Naive thymus-derived CD4-positive, alpha-beta T cell (primary cell): ENCODE measurements at regions of chr13 and their contacts with region 1.

Region 1: DNA sequence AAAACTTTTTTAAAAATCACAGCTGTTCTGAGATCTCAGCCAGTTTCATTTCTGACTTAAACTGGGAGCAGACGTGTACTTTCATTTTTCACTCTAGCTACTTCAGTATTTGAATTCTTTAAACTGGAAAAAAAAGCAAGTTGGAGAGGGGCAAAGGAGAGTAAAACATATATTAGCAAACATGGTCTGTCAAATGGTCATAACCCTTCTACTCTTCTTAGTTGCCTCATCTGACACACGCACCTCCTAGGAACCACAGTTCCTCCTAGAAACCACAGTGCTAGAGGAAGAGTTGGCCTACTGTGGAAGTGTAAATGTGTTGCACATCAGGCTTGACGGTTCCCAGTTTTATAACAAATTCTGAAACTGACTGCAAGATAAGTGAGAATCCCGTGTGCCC is 47.2 kb downstream of the TM9SF2 start:
- DNase-seq: no peak
- ATAC-seq: peak; percentile 49
- H3K4me3 ChIP-seq: no peak overlapping the region
- H3K4me3 Mint-ChIP-seq: peak overlapping the region in 1 of 10 donors; percentile 14
- H3K27ac ChIP-seq: peak overlapping the region; percentile 29
- H3K27ac Mint-ChIP-seq: peak overlapping the region; percentile 29 to 97 (median 79)
- H3K4me1 ChIP-seq: peaks cover 3 to 9% of the 10 kb centered on the region in 2 donors
- H3K4me1 Mint-ChIP-seq: peaks cover 4 to 40% (median 19%) of the 10 kb centered on the region in 7 donors
- H3K27me3 ChIP-seq: no peaks in the 10 kb centered on the region
- H3K27me3 Mint-ChIP-seq: no peaks in the 10 kb centered on the region

Region 2: DNA sequence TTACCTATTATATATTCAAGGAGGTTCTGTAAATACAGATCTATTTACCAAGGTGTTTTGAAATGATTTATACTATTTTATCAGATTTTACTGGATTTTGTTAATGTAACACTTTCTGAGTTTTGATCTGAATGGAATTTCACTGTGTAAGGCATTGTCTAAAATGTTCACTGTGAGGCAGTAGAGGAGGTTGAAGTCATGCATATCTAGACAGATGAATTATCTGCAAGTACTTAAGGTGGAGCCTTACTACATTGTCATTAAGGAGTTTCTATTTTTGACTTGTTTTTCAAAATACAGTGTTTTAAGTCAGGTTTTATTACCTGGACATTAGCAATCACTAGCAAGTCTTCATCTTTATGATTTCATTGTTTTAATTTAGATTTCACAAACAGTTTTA is 15.0 kb after region 1 on chr13:
- CTCF ChIA-PET with region 1: no interaction called
- POLR2A ChIA-PET with region 1: interaction called, 4 read pairs
- intact Hi-C with region 1: loop called in 1 of 2 experiments (anchors 2 kb)
- DNase-seq: no peak
- ATAC-seq: no peak
- H3K4me3 ChIP-seq: no peak overlapping the region
- H3K4me3 Mint-ChIP-seq: no peak overlapping the region
- H3K27ac ChIP-seq: no peak overlapping the region
- H3K27ac Mint-ChIP-seq: peak overlapping the region in 5 of 9 donors; percentile 15 to 86 (median 22)
- H3K4me1 ChIP-seq: no peaks in the 10 kb centered on the region
- H3K4me1 Mint-ChIP-seq: peaks cover 7 to 20% (median 10%) of the 10 kb centered on the region in 7 donors
- H3K27me3 ChIP-seq: no peaks in the 10 kb centered on the region
- H3K27me3 Mint-ChIP-seq: no peaks in the 10 kb centered on the region

Region 3: DNA sequence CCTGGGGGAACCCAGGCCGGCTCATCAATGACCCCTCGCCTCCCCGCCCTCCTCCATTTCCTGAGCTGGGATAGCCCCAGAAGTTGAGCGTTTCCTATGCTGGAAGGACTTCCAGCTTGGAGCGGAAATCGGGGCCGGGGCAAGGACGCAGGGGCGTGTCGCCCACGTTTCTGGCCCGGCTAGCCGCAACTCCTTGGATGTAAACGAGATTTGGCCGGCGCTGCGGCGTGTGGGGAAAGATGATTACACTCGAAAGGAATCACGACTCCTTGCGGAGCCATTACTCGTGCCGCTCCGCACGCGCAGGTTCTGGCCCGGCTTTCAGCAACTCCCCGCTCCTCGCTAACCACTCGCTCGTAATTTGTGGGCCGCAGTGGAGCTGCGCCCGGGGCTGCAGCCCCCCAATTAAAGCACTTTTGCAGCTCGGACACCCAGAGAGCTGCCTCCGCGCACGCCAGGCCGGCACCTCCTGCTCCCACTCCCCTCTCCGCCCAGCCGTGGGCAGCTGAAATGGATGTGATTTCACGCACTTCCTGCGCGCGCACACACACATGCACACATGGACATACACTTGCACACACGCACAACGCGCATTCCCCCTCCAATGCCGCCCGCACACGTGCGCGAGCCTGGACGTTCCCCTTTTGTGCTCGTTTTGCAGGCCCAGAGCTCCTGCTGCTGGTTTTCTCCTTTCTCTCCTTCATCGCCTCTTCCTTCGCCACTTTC is 407.5 kb after region 1 on chr13:
- CTCF ChIA-PET with region 1: no interaction called
- POLR2A ChIA-PET with region 1: no interaction called
- intact Hi-C with region 1: no loop called
- DNase-seq: peak in 1 of 9 donors; percentile 14
- ATAC-seq: no peak
- H3K4me3 ChIP-seq: peak overlapping the region; percentile 24
- H3K4me3 Mint-ChIP-seq: peak overlapping the region; percentile 23 to 79 (median 66)
- H3K27ac ChIP-seq: no peak overlapping the region
- H3K27ac Mint-ChIP-seq: peak overlapping the region in 3 of 9 donors; percentile 25 to 41 (median 38)
- H3K4me1 ChIP-seq: peaks cover 17 to 31% of the 10 kb centered on the region in 2 donors
- H3K4me1 Mint-ChIP-seq: peaks cover 9 to 43% (median 34%) of the 10 kb centered on the region in 7 donors
- H3K27me3 ChIP-seq: peaks cover 20 to 49% of the 10 kb centered on the region in 2 donors
- H3K27me3 Mint-ChIP-seq: peaks cover 68 to 90% (median 82%) of the 10 kb centered on the region in 5 donors

Region 4: DNA sequence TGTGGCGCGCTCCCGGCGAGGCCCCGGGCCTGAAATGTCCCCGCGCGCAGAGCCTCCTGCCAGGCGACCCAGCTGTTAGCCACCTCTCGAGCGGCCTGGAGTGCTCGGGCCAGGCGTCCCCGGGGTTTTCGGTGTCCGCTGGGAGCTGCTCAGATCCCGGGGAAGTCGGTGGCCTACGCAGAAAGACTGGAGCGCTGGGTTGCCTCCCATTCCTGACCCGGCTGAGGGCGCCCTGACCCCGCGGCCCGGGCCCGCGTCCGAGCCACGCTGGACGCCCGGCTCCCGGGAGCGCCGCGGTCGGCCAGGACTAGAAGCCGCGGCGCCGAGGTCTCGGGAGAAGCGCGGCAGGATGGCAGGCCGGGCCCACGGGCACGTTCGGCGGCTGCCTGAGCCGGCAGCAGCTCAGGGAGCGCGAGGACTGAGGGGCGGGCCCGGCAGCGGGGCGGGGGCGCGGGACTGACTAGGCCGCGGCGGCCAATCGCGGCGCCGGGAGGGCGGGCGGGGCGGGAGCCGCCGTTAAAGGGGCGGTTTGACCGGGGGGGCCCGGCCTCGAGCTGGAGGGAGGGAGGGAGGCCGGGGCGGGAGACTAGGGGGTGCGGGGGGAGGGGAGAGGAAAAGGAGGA is 431.9 kb after region 1 on chr13:
- CTCF ChIA-PET with region 1: no interaction called
- POLR2A ChIA-PET with region 1: no interaction called
- intact Hi-C with region 1: no loop called
- DNase-seq: peak in 6 of 9 donors; percentile 44 to 64 (median 55)
- ATAC-seq: peak; percentile 78
- H3K4me3 ChIP-seq: no peak overlapping the region
- H3K4me3 Mint-ChIP-seq: peak overlapping the region in 4 of 10 donors; percentile 42 to 68 (median 59)
- H3K27ac ChIP-seq: no peak overlapping the region
- H3K27ac Mint-ChIP-seq: no peak overlapping the region
- H3K4me1 ChIP-seq: peaks cover 8 to 18% of the 10 kb centered on the region in 2 donors
- H3K4me1 Mint-ChIP-seq: peaks cover 0 to 35% (median 23%) of the 10 kb centered on the region in 7 donors
- H3K27me3 ChIP-seq: peaks cover 22 to 66% of the 10 kb centered on the region in 2 donors
- H3K27me3 Mint-ChIP-seq: peaks cover 51 to 71% (median 54%) of the 10 kb centered on the region in 5 donors